Activated CD4-positive, alpha-beta memory T cell treated with anti-CD3 and anti-CD28 coated beads for 36 hours (primary cell): ENCODE measurements at regions of chr7 and their contacts with region 1.

Region 1: DNA sequence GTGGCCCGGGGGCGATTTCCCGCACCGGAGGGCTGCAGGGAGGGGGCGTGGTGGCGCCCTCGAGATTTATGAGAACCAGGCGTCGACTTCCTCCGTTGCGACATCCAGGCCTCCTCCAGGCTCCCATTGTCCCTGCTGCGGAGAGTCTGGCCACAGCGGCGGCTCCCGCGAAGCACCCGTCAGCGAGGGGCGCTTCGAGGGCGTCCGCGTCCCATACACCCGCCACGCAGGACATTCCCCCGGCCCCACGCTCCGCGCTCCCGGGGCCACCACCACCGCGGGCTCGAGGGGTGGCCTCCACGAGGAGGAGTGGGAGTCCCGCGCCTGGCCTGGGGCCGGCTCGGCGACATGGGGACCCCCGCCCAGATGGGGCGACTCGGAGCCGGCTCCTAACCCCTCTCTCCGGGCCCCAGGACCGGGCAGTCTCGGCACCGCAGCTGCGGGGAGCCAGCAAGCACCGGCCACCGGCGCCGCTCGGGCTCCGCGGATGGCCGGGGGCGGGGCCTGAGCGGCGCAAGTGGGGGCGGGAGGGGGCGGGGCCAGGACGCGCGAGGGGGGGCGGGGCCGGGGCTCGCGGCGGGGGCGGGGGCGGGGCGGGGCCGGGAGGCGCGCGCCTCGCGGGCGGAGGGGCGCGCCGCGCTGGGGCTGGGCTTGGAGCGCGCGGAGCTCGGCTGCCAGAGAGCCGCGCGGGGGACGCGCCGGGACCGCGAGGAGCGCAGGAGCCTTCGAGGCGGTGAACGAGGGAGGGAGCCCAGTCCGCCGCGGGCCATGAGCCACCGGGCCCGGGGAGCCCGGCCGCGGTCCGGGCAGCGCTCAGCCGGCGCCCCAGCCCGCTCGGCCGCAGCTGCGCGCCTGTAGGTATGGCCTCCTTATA is at the start of gene SH2B2:
- DNase-seq: peak; percentile 56
- H3K4me3 Mint-ChIP-seq: peak within 1 kb of the TSS; percentile 68
- H3K27ac Mint-ChIP-seq: no peak within 1 kb of the TSS
- H3K4me1 Mint-ChIP-seq: peaks cover 34% of the 10 kb centered on the region
- H3K27me3 Mint-ChIP-seq: peaks cover 6% of the 10 kb centered on the region
- total RNA-seq, gene SH2B2: 3.8 to 4.7 TPM

Region 2: GRCh38 chr7:102193806-102194205 is 92.7 kb before region 1 on chr7:
- CTCF ChIA-PET with region 1: no interaction called
- POLR2A ChIA-PET with region 1: no interaction called
- intact Hi-C with region 1: no loop called
- DNase-seq: no peak
- H3K4me3 Mint-ChIP-seq: no peak overlapping the region
- H3K27ac Mint-ChIP-seq: no peak overlapping the region
- H3K4me1 Mint-ChIP-seq: no peaks in the 10 kb centered on the region
- H3K27me3 Mint-ChIP-seq: no peaks in the 10 kb centered on the region

Region 3: DNA sequence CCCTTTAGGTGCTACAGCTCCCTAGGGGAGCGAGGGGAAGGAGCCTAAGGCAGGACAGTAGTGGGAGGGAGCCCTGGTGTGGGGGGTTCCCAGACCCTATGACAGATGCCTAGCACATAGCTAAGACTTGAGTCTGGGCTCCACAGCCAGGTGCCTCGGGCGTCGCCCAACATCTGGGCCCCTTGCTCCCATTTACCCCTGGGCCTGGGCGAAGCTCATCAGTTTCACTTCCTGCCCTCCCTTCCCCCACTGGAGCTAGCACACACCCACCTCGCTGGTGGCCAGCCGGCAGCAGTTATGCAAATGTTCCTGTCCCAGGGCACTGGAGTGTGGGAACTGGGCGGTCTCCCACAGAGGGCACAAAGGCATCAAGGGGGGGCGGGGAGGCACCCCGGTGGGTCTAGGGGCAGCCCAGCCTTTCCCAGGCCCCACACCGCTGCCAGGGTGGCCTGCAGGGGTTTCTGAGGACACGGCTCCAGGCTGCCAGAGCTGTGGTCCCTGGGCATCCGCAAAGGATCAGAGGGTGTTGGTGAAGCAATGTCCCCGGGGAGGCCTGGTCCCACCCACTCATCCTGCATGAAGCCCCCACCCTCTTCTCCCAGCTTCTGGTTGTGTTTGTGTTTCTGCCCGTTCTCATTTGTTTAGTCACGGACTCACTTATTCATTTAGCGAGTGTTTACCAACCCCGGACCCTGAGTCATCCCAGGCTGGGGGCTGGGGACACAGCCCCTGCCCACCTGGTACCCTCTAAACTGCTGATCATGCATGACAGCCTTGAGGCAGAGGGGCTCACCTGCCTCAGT is 20.6 kb after region 1 on chr7:
- CTCF ChIA-PET with region 1: interaction called, 4 read pairs
- POLR2A ChIA-PET with region 1: no interaction called
- intact Hi-C with region 1: loop called (anchors 2 kb)
- DNase-seq: peak; percentile 78
- H3K4me3 Mint-ChIP-seq: no peak overlapping the region
- H3K27ac Mint-ChIP-seq: peak overlapping the region; percentile 33
- H3K4me1 Mint-ChIP-seq: peaks cover 14% of the 10 kb centered on the region
- H3K27me3 Mint-ChIP-seq: no peaks in the 10 kb centered on the region

Region 4: GRCh38 chr7:102464577-102465280 is 178.3 kb after region 1 on chr7 and contains the starts of genes ALKBH4 and LRWD1:
- CTCF ChIA-PET with region 1: no interaction called
- POLR2A ChIA-PET with region 1: no interaction called
- intact Hi-C with region 1: loop called (anchors 5 kb)
- DNase-seq: peak; percentile 97
- H3K4me3 Mint-ChIP-seq: peak within 1 kb of the TSS; percentile 93
- H3K27ac Mint-ChIP-seq: peak within 1 kb of the TSS; percentile 75
- H3K4me1 Mint-ChIP-seq: peaks cover 28% of the 10 kb centered on the region
- H3K27me3 Mint-ChIP-seq: no peaks in the 10 kb centered on the region
- total RNA-seq, gene ALKBH4: 7.7 to 7.8 TPM
- total RNA-seq, gene LRWD1: 16.4 to 20.0 TPM